Right ventricle myocardium inferior (tissue), 1 donor: ENCODE measurements at regions of chr16 and their contacts with region 1.

Region 1: DNA sequence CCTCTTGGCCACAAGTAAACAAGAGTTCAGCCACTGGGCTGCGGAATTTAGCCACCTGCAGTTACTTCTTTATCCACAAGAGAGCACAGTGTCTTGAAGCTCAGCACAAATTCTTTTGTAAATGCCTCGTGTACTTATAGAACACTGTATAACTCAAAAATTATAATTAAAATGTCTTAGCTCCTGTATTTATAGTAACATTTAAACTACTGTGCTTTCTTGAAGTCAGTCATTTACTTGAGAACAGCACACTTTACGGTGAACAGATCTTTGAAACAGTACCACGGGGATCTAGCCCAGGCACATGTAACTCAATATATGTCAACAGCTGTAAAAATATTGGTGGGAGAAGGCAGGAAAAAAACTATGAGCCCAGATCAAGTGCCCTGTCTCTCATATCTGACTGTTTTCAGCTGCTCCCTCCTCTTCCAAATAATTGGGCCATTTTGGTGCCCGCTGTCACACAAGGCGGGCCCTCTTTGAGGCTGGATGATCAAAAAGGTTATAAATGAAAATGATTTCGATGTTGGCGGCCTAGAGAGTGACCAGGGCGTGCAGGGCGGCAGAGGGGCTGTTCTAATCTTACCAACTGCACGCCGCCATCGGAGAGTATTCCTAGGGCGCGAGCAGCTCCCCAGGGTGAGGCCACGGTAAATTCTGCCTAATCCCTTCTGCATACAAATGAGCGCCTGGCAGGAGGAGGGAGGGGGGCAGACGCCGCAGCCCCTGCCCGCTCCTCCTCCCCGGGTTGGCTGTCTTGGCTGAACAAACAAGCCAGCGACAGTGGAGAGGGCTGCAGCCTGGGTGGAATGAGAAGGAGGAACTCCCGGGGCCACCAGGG is 183.2 kb downstream of the C16orf78 start:
- DNase-seq: no peak
- ATAC-seq: no peak

Region 2: DNA sequence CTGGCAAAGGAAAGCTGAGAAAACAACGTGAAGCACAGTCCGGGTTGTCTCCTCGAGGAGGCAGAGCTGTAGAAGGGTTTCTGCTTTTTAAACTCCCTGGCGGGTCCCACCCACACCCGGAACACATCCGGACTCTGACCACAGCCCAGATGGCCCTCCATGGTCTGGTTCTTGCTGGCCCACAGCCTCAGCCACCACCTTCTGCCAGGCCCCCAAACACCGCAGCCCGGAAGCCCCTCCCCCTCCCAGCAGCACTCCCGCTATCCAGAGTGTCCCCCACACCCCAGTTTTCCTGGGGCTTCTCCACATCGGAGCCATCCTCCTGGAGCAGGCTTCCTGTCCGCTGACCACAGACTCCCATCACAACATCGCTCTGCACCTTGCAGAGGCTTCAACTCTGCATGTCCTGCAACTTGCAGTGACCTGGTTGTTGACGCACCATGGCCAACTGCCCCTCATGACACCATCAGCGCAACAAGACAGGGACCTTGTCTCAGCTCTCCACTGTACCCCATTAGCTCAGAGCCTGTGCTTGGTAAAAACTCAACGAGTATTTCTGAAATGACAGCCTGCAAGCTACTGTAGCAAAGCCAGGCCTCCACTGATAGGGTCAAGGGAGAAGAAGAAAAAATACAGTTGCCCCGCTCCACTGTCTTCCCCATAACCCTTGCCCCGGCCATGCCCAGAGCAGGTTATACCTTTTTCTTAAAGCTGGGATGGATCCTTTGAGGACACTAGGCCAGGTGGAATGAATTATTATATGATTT is 53.4 kb before region 1 on chr16:
- intact Hi-C with region 1: no loop called
- DNase-seq: no peak
- ATAC-seq: peak; percentile 18

Region 3: GRCh38 chr16:49580751-49581303 is 24.0 kb after region 1 on chr16:
- intact Hi-C with region 1: loop called (anchors 2 kb)
- DNase-seq: no peak
- ATAC-seq: no peak

Region 4: GRCh38 chr16:49592546-49593423 is 36.0 kb after region 1 on chr16:
- intact Hi-C with region 1: loop called (anchors 5 kb)
- DNase-seq: no peak
- ATAC-seq: no peak